Endothelial cell of umbilical vein (primary cell): ENCODE measurements at regions of chr3 and their contacts with region 1.

Region 1: GRCh38 chr3:86733257-86733656 is 257.7 kb downstream of the VGLL3 start:
- DNase-seq: no peak
- H3K4me3 ChIP-seq: no peak overlapping the region
- H3K27ac ChIP-seq: no peak overlapping the region
- H3K4me1 ChIP-seq: no peaks in the 10 kb centered on the region
- H3K27me3 ChIP-seq: no peaks in the 10 kb centered on the region
- CTCF ChIP-seq: no peak
- POLR2A ChIP-seq: no peak

Region 2: GRCh38 chr3:85890043-85890555 is 843.2 kb before region 1 on chr3:
- CTCF ChIA-PET with region 1: no interaction called
- POLR2A ChIA-PET with region 1: no interaction called
- dilution Hi-C with region 1: no loop called
- intact Hi-C with region 1: loop called (anchors 10 kb)
- DNase-seq: no peak
- H3K4me3 ChIP-seq: no peak overlapping the region
- H3K27ac ChIP-seq: no peak overlapping the region
- H3K4me1 ChIP-seq: no peaks in the 10 kb centered on the region
- H3K27me3 ChIP-seq: no peaks in the 10 kb centered on the region
- CTCF ChIP-seq: no peak
- POLR2A ChIP-seq: no peak